ENCODE measurements at regions of chr3 and their contacts with region 1.

Region 1: DNA sequence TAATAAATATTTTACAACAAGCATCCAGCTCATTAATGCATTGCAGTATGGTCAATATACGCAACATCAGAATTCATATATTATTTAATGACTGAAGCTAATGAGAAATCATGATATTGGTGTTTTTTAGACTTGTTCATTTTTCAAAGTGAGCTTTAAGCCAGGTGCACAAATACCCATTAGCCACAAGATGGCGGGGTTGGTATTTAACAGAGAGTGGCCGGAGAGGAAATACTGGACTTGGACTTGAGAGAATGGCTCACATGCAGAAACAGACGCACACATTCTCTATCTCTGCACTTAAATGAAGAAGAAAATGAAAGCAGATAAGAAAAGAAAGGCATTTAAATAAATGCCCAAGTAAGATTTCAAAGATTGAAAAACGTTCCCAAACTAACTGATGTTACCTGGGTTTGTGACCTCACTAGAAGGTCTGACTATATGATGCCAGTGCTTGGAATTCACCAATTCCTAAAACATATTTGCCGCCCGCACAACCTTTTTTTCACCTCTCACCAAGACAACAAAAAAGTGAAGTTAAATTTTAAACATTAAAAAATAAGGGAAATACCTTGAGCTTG is 21.2 kb upstream of the CRBN start:
- DNase-seq: no peak
- H3K4me3 ChIP-seq: no peak overlapping the region
- H3K27ac ChIP-seq: no peak overlapping the region
- H3K4me1 ChIP-seq: no peaks in the 10 kb centered on the region
- H3K27me3 ChIP-seq: peaks cover 47% of the 10 kb centered on the region
- CTCF ChIP-seq: peak; percentile 81

Region 2: DNA sequence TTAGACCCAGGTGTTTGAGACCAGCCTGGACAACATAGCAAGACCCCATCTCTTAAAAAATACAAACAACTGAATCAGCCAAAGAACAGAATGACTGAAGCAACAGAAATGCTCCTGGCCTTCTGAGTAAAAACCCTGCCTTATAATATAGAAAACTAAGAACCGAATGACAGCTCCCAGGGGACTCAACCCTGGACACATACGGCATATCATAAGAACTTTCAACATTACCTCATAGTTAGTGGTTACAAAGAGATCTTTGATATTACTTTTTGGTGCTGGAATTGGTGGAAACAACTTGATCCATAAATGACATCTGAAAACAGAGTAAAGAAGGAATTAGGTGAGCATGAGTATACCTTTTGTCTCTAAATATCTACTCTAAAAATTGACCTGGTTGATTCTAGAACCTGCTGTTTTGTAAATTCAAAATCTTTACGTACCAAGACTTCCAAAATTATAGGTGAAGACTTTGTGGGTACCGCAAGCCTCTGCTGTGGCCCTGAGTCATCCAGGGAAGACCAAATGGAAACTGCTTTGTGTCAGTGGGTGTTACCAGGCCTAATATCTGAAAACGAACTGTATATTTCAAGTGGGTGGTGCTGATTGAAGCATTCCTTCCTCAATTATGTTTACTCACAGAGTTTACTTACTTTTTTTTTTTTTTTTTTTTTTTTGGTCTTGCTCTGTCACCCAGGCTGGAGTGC is 126.0 kb before region 1 on chr3:
- intact Hi-C with region 1: no loop called
- DNase-seq: no peak
- H3K4me3 ChIP-seq: no peak overlapping the region
- H3K27ac ChIP-seq: no peak overlapping the region
- H3K4me1 ChIP-seq: no peaks in the 10 kb centered on the region
- H3K27me3 ChIP-seq: peaks cover 8% of the 10 kb centered on the region
- CTCF ChIP-seq: no peak

Region 3: DNA sequence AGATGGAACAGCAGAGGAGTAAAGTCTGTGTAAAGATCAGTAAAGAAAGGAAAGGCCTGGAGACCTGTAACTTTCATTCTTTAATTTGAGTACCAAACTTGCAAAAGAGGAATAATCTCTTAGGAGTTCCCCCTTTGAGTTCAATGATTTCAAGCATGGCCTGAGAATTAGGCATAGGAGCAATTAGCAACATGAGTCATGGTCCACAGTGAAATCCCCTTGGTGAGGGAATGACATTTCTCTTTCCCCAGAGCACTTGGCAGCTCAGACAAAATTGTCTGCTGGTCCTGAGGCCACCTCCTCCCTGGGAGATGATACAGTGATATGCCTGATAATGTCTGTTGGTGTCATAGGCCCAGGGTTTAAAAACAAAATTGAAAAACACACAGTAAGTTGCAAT is 60.1 kb after region 1 on chr3:
- intact Hi-C with region 1: no loop called
- DNase-seq: no peak
- H3K4me3 ChIP-seq: no peak overlapping the region
- H3K27ac ChIP-seq: no peak overlapping the region
- H3K4me1 ChIP-seq: no peaks in the 10 kb centered on the region
- H3K27me3 ChIP-seq: no peaks in the 10 kb centered on the region
- CTCF ChIP-seq: no peak

Region 4: DNA sequence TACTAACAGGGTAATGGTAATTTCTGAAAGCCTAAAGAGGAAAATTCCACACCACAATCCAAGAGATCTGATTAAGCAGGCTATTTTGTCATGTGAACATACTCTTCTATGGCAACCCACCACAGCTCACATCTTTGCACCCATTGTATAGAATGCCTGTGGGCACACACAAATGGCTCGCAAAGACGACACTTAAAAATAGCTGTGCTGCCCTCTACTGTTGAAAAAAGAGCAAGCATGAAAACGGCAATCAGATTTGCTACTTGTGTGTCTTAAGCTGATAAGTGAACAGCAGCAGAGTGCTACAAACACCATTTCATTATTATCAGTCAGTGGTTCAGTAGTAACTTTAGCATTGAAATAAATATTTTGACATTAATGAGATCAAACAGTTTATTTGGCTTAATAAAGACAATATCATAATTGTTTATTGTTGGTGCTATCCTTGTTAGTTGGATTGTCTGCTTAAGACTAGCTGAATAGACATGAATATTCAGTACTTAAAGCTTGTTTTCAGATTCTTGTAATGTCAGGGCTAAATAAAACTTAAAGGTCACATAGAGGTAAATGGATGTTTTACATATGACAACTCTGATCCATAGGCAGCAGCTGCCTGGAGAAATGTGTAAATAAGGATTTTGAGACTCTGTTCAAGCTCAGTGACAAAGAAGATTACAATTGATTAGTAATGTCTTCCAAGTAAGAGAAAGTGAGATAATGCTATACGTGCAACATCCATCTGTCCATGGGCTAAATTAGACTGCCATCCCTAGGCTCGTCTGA is 797.6 kb after region 1 on chr3:
- intact Hi-C with region 1: loop called (anchors 10 kb)
- DNase-seq: no peak
- H3K4me3 ChIP-seq: no peak overlapping the region
- H3K27ac ChIP-seq: no peak overlapping the region
- H3K4me1 ChIP-seq: no peaks in the 10 kb centered on the region
- H3K27me3 ChIP-seq: no peaks in the 10 kb centered on the region
- CTCF ChIP-seq: peak; percentile 60

Region 5: GRCh38 chr3:4289044-4289443 is 1088.3 kb after region 1 on chr3:
- intact Hi-C with region 1: loop called (anchors 2 kb)
- DNase-seq: no peak
- H3K4me3 ChIP-seq: no peak overlapping the region
- H3K27ac ChIP-seq: no peak overlapping the region
- H3K4me1 ChIP-seq: no peaks in the 10 kb centered on the region
- H3K27me3 ChIP-seq: no peaks in the 10 kb centered on the region
- CTCF ChIP-seq: no peak

Measured in left ventricle myocardium inferior (tissue), 1 donor.